T-cell (primary cell): ENCODE measurements at regions of chr19 and their contacts with region 1.

Region 1: GRCh38 chr19:47195434-47195833 is 35.6 kb downstream of the BBC3 start:
- DNase-seq: no peak
- ATAC-seq: no peak
- H3K4me3 ChIP-seq: no peak overlapping the region
- H3K4me3 Mint-ChIP-seq: no peak overlapping the region
- H3K27ac ChIP-seq: no peak overlapping the region
- H3K27ac Mint-ChIP-seq: no peak overlapping the region
- H3K4me1 ChIP-seq: peaks cover 12 to 22% of the 10 kb centered on the region in 2 experiments
- H3K4me1 Mint-ChIP-seq: peaks cover 30 to 37% (median 31%) of the 10 kb centered on the region in 3 donors
- H3K27me3 ChIP-seq: no peaks in the 10 kb centered on the region
- H3K27me3 Mint-ChIP-seq: no peaks in the 10 kb centered on the region

Region 2: DNA sequence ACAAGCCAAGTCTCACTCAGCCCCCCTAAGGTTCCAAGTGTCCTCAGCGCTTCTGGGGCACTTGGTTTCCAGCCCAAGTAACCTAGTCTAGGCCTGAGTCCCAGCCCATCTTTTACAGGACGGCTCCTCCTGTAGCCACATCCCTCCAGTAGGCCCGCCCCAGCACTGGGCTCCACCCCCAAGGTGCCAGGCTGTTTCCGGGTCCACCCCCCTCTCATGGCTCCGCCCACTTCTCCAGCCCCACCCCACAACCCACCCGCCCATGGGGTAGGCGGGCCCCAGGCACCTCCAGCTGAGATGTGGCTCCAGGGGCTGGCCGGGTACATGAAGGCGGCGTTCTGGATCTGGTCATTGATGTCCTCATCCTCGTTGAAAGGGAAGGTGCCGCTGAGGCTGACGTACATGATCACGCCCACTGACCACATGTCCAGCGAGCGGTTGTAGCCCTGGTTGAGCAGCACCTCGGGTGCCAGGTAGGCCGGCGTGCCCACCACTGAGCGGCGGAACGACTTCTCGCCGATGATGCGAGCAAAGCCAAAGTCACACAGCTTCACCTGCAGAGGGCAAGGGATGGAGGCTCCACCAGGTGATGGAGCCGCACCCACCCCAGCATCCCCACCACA is 517.2 kb before region 1 on chr19:
- CTCF ChIA-PET with region 1: no interaction called
- POLR2A ChIA-PET with region 1: interaction called in 1 of 2 experiments, 12 read pairs
- DNase-seq: peak in 33 of 35 experiments; percentile 22 to 73 (median 59)
- ATAC-seq: peak; percentile 76 to 96 (median 80)
- H3K4me3 ChIP-seq: no peak overlapping the region
- H3K4me3 Mint-ChIP-seq: no peak overlapping the region
- H3K27ac ChIP-seq: no peak overlapping the region
- H3K27ac Mint-ChIP-seq: peak overlapping the region in 1 of 2 donors; percentile 39
- H3K4me1 ChIP-seq: peaks cover 0 to 4% of the 10 kb centered on the region in 2 experiments
- H3K4me1 Mint-ChIP-seq: peaks cover 4 to 15% (median 8%) of the 10 kb centered on the region in 3 donors
- H3K27me3 ChIP-seq: no peaks in the 10 kb centered on the region
- H3K27me3 Mint-ChIP-seq: no peaks in the 10 kb centered on the region

Region 3: GRCh38 chr19:47330466-47330869 is 135.0 kb after region 1 on chr19:
- CTCF ChIA-PET with region 1: no interaction called
- POLR2A ChIA-PET with region 1: no interaction called
- DNase-seq: no peak
- ATAC-seq: no peak
- H3K4me3 ChIP-seq: no peak overlapping the region
- H3K4me3 Mint-ChIP-seq: no peak overlapping the region
- H3K27ac ChIP-seq: no peak overlapping the region
- H3K27ac Mint-ChIP-seq: no peak overlapping the region
- H3K4me1 ChIP-seq: peaks cover 0 to 2% of the 10 kb centered on the region in 2 experiments
- H3K4me1 Mint-ChIP-seq: peaks cover 0 to 6% (median 0%) of the 10 kb centered on the region in 3 donors
- H3K27me3 ChIP-seq: peaks cover 0 to 11% of the 10 kb centered on the region in 2 experiments
- H3K27me3 Mint-ChIP-seq: peaks cover 5 to 6% of the 10 kb centered on the region in 2 donors

Region 4: DNA sequence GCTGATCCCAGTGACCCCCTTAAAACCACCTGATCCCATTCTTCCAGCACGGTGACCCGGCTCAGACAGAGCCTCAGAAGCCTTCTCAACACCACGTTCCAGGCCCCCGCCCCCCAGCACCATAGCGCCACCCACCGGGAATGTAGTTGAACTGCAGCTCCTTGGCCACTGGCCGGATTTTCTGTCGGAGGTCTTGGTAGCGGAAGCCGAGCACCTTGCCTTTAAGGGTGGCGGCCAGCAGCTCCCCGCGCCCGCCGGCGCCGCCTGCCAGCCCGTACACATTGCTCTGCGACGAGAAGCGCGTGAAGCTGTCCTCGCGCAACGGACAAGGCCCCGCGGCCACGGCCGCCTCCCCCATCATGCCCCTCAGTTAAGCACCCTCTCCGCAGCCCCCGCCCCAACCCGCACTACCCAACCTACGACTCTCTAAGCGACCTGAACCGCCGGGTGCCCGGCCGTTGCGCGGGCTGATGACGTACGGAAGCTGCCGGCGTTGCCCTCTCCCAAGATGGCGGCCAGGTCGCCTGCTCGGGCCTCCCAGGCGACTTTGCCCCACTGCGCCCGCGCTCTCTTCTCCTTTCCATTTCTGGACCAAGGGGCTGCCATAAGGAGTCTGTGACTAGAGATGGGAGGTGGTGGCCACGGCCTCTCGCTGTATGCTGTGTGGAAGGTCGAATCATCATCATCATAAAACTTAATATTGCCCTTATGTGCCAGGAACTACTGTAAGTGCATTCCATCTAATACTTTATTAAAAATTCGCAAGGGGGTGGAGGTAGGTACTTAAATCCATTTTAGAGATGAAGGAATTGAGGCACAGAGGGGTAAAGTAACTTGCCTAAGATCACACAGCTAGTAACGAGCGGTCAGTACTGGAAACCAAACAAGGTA is 288.6 kb after region 1 on chr19 and contains the start of gene KPTN:
- CTCF ChIA-PET with region 1: no interaction called
- POLR2A ChIA-PET with region 1: no interaction called
- DNase-seq: peak; percentile 77 to 92 (median 85)
- ATAC-seq: peak; percentile 85 to 88 (median 88)
- H3K4me3 ChIP-seq: peak within 1 kb of the TSS; percentile 74 to 93
- H3K4me3 Mint-ChIP-seq: peak within 1 kb of the TSS; percentile 95 to 97 (median 96)
- H3K27ac ChIP-seq: peak within 1 kb of the TSS; percentile 82
- H3K27ac Mint-ChIP-seq: peak within 1 kb of the TSS; percentile 98 to 99
- H3K4me1 ChIP-seq: peaks cover 20 to 43% of the 10 kb centered on the region in 2 experiments
- H3K4me1 Mint-ChIP-seq: peaks cover 32 to 45% (median 38%) of the 10 kb centered on the region in 3 donors
- H3K27me3 ChIP-seq: no peaks in the 10 kb centered on the region
- H3K27me3 Mint-ChIP-seq: no peaks in the 10 kb centered on the region
- total RNA-seq, gene KPTN: 2.8 to 5.8 (median 5.4) TPM